ENCODE measurements at regions of chrX and their contacts with region 1.

Region 1: DNA sequence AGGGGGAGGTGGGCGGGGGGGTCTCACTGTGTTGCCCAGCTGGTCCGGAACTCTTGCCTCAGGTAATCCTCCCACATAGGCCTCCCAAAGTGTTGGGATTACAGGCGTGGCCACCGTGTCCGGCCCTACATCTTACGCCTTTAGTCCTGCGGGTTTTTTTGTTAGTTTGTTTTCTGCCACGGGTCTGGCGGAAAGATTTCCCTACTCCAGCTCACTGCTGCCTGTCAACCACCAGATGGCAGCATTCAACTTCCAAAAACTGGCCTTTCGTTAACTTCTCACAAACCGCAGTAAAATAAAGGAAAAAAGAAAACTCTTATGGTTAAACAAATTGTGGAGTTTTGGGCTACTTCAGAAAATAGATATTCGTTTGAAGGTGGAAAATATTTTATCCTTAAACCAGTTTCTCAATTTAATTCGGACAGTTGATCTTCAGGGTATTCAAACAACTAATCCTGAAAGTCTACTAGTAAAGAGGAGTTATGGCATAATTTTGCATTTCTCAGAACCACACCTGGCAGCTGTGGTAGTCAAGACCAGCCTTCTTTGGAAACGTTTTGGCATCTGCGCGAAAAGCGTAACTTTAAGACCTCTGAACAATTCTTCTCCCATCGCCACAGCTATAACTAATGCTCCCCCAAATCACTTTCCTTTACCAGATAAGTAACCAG is 41.1 kb downstream of the LUZP4 start:
- DNase-seq: peak; percentile 7
- ATAC-seq: no peak
- H3K4me3 Mint-ChIP-seq: no peak overlapping the region
- H3K27ac Mint-ChIP-seq: no peak overlapping the region
- H3K4me1 Mint-ChIP-seq: no peaks in the 10 kb centered on the region
- H3K27me3 Mint-ChIP-seq: no peaks in the 10 kb centered on the region
- CTCF ChIP-seq: peak; percentile 53

Region 2: GRCh38 chrX:115642895-115643530 is 312.4 kb after region 1 on chrX:
- CTCF ChIA-PET with region 1: interaction called, 12 read pairs
- POLR2A ChIA-PET with region 1: no interaction called
- intact Hi-C with region 1: loop called (anchors 2 kb)
- DNase-seq: peak; percentile 49
- ATAC-seq: no peak
- H3K4me3 Mint-ChIP-seq: no peak overlapping the region
- H3K27ac Mint-ChIP-seq: no peak overlapping the region
- H3K4me1 Mint-ChIP-seq: no peaks in the 10 kb centered on the region
- H3K27me3 Mint-ChIP-seq: no peaks in the 10 kb centered on the region
- CTCF ChIP-seq: peak; percentile 77